Right ventricle myocardium superior (tissue), 1 donor: ENCODE measurements at regions of chr19 and their contacts with region 1.

Region 1: GRCh38 chr19:46030812-46031550 is 8.1 kb upstream of the PGLYRP1 start:
- DNase-seq: no peak
- ATAC-seq: no peak

Region 2: DNA sequence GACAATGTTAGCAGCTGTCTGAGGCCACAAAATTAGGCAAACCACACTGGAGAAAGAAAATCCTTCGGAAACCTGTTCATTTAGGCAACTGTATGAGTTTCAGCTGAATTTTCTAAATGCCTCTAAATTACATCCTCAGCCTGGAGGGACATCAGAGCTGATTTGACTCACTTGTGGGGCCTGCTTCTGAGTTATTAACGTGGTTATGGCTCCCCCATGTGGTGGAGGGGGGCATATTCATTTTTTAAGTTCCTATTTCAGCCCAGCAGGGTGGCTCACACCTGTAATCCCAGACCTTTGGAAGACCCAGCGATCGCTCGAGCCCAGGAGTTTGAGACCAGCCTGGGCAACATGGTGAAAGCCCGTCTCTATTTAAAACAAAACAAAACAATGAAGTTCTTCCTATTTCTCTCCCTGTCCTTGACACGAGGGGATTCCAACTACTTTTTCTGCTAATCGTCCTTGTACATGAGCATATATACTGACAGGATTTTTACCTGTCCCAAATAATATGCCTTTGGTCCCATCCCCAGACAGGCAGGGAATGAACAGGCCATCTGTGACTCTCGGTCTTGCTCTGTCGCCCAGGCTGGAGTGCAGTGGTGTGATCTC is 234.3 kb after region 1 on chr19:
- intact Hi-C with region 1: loop called (anchors 2 kb)
- DNase-seq: no peak
- ATAC-seq: peak; percentile 86

Region 3: GRCh38 chr19:46442808-46443450 is 411.9 kb after region 1 on chr19:
- intact Hi-C with region 1: no loop called
- DNase-seq: no peak
- ATAC-seq: peak; percentile 45